ENCODE measurements at regions of chr14 and their contacts with region 1.

Region 1: DNA sequence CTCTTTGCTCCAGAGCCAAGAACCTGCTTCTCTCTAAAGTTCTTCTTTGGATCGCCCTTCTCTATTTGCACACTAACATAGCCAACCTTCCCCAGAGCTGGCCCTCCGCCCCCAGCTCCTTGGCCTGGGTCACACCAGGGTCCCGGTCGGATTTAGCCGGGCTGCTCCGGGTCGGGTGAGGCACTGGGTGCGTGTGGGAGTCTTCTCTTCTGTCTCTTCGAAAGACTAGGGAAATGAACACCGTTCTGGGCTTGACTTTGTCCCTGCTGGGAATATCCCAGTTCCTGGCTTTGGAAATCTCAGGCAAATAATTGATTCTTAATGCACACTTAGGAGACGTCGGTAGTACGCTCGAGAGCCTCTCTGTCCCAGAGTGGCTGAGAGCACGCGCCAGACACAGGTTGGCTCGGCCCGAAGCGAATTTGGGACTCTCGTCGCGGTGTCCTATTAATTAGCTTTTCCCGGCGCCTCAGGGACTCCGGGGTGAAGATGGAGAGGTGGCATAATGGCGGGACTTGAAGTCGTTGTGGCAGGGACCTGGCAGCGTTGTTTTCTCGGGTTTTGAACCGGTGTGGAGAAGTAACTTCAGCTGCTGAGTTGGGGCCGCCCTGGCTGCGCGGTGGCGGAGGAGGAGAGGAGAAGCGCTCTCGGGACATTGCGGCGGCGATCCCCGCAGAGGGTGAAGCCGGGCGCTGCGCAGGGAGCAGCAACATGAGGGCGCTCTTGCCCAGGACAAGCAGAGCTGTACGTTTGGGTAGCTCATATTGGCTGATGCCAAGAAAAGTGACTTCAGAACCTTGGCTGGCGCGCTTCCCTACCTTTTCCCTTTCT is 7.5 kb downstream of the FOXG1 start:
- DNase-seq: no peak
- H3K4me3 Mint-ChIP-seq: no peak overlapping the region
- H3K27ac Mint-ChIP-seq: no peak overlapping the region
- H3K4me1 Mint-ChIP-seq: peaks cover 4% of the 10 kb centered on the region
- H3K27me3 Mint-ChIP-seq: peaks cover 70% of the 10 kb centered on the region

Region 2: GRCh38 chr14:28482251-28483040 is 291.6 kb before region 1 on chr14:
- CTCF ChIA-PET with region 1: no interaction called
- intact Hi-C with region 1: no loop called
- DNase-seq: no peak
- H3K4me3 Mint-ChIP-seq: no peak overlapping the region
- H3K27ac Mint-ChIP-seq: no peak overlapping the region
- H3K4me1 Mint-ChIP-seq: no peaks in the 10 kb centered on the region
- H3K27me3 Mint-ChIP-seq: no peaks in the 10 kb centered on the region

Region 3: DNA sequence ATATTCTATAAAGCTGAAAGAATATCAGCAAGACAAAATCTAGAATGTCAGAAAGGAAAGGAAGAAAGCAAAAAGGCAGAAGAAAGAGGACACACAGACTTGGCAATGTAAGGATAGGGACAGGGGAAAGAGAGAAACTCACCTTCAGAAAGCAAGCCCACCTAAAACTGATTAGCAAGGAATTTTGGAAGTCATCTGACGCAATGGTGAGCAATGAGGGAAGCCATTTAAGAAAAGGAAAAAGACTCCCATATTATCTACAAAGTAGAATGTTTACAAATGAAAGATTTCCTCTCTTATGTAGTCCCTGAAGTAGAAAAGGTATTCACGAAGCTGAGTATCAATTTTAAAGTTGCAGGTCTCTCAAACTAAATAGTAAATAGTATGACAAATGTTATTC is 42.7 kb before region 1 on chr14:
- CTCF ChIA-PET with region 1: no interaction called
- intact Hi-C with region 1: no loop called
- DNase-seq: no peak
- H3K4me3 Mint-ChIP-seq: no peak overlapping the region
- H3K27ac Mint-ChIP-seq: no peak overlapping the region
- H3K4me1 Mint-ChIP-seq: no peaks in the 10 kb centered on the region
- H3K27me3 Mint-ChIP-seq: no peaks in the 10 kb centered on the region

Region 4: DNA sequence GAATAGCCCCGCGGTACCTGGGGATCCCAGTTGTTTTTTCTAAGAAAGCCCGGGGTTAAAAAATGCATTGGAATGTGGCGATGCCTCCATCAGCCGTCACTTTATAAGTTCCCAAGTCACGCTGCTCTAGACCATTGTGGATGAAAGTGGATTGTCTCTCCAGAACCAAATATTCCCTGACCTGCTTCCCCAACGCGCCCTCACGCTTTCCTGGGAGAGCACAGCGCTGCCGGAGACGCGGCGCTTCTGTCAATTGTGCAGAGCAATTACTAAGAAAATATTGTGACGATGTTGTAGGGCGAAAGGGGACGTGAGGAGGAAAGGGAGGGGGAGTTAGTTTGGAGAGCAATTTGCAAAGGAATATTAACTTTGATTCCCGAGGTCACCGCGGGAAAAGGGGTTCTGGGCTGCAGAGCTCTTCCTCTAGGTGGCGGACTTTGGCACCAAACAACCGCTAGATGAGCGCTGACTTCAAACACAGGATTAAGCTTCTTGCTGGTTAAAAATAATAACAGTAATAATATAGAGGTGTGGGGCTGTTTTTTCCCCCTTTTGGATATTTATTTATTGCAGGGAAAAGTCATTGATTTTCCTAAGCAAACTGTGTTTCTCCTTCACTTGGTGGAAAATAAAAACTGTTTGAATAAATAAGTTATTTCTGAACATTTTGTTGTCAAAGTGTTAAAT is 17.0 kb before region 1 on chr14:
- CTCF ChIA-PET with region 1: no interaction called
- intact Hi-C with region 1: loop called (anchors 2 kb)
- DNase-seq: peak; percentile 18
- H3K4me3 Mint-ChIP-seq: no peak overlapping the region
- H3K27ac Mint-ChIP-seq: no peak overlapping the region
- H3K4me1 Mint-ChIP-seq: no peaks in the 10 kb centered on the region
- H3K27me3 Mint-ChIP-seq: peaks cover 76% of the 10 kb centered on the region